ENCODE measurements at regions of chr15 and their contacts with region 1.

Region 1: GRCh38 chr15:48507416-48508065 is 138.0 kb downstream of the FBN1 start:
- DNase-seq: peak; percentile 43
- ATAC-seq: peak; percentile 93
- H3K4me3 ChIP-seq: no peak overlapping the region
- H3K27ac ChIP-seq: no peak overlapping the region
- H3K4me1 ChIP-seq: peaks cover 11% of the 10 kb centered on the region
- H3K27me3 ChIP-seq: no peaks in the 10 kb centered on the region
- CTCF ChIP-seq: peak; percentile 58
- EP300 ChIP-seq: peak in 1 of 2 experiments; percentile 13; a peak in 1 of 4 replicates
- POLR2A ChIP-seq: no peak
- RAD21 ChIP-seq: no peak

Region 2: GRCh38 chr15:48367483-48367882 is 140.1 kb before region 1 on chr15:
- CTCF ChIA-PET with region 1: no interaction called
- POLR2A ChIA-PET with region 1: no interaction called
- in situ Hi-C with region 1: no loop called
- intact Hi-C with region 1: loop called (anchors 5 kb)
- DNase-seq: no peak
- ATAC-seq: no peak
- H3K4me3 ChIP-seq: no peak overlapping the region
- H3K27ac ChIP-seq: no peak overlapping the region
- H3K4me1 ChIP-seq: no peaks in the 10 kb centered on the region
- H3K27me3 ChIP-seq: no peaks in the 10 kb centered on the region
- CTCF ChIP-seq: no peak
- EP300 ChIP-seq: no peak
- POLR2A ChIP-seq: no peak
- RAD21 ChIP-seq: no peak

Region 3: GRCh38 chr15:48414015-48414414 is 93.5 kb before region 1 on chr15:
- CTCF ChIA-PET with region 1: no interaction called
- POLR2A ChIA-PET with region 1: no interaction called
- in situ Hi-C with region 1: no loop called
- intact Hi-C with region 1: loop called (anchors 10 kb)
- DNase-seq: no peak
- ATAC-seq: no peak
- H3K4me3 ChIP-seq: no peak overlapping the region
- H3K27ac ChIP-seq: no peak overlapping the region
- H3K4me1 ChIP-seq: peaks cover 14% of the 10 kb centered on the region; the same call in 1 of the 2 replicates
- H3K27me3 ChIP-seq: no peaks in the 10 kb centered on the region
- CTCF ChIP-seq: no peak
- EP300 ChIP-seq: no peak
- POLR2A ChIP-seq: no peak
- RAD21 ChIP-seq: no peak

Measured in HepG2 (cell line).